Naive thymus-derived CD4-positive, alpha-beta T cell (primary cell): ENCODE measurements at regions of chr6 and their contacts with region 1.

Region 1: DNA sequence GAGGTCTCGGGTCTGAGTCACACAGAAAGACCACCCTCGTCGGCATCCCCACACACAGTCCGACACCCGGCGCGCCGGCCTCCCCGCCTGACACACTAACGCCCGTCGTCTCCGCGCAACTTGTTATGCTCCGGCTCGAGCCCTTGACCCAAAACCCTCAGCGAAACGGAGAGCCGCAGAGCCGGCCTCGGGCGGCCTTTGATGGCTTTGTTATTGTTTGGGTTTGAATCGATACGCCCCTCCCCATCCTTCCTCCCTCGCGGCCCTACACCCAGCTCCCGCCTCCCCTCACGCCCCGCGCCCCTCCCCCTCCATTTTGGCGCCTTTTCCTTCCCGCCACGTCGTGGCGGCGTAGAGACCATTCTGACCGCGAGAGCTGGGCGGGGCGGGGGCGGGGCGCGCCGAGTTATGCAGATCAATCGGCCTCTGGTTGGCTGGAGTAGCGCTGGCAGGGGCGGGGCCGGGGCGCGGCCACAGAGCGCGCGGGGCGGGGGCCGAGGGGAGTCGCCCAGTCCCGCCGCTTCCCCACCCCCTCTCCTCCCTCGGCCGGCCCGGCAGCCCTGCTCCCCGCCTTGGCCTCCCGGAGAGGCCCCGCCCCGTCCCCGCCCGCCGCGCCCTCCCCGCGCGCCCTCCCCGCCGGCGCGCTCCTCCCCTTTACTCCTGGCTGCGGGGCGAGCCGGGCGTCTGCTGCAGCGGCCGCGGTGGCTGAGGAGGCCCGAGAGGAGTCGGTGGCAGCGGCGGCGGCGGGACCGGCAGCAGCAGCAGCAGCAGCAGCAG is at the start of gene PIM1:
- DNase-seq: peak; percentile 91 to 98 (median 95)
- ATAC-seq: peak; percentile 94
- H3K4me3 ChIP-seq: peak within 1 kb of the TSS; percentile 71
- H3K4me3 Mint-ChIP-seq: peak within 1 kb of the TSS; percentile 92 to 100 (median 94)
- H3K27ac ChIP-seq: peak within 1 kb of the TSS; percentile 86
- H3K27ac Mint-ChIP-seq: peak within 1 kb of the TSS; percentile 93 to 98 (median 96)
- H3K4me1 ChIP-seq: peaks cover 21% of the 10 kb centered on the region in 2 donors
- H3K4me1 Mint-ChIP-seq: peaks cover 19 to 40% (median 34%) of the 10 kb centered on the region in 7 donors
- H3K27me3 ChIP-seq: no peaks in the 10 kb centered on the region
- H3K27me3 Mint-ChIP-seq: no peaks in the 10 kb centered on the region
- total RNA-seq, gene PIM1: 100 to 550 (median 172) TPM

Region 2: GRCh38 chr6:36241728-36242127 is 928.0 kb before region 1 on chr6:
- CTCF ChIA-PET with region 1: no interaction called
- POLR2A ChIA-PET with region 1: no interaction called
- intact Hi-C with region 1: no loop called
- DNase-seq: no peak
- ATAC-seq: peak; percentile 66
- H3K4me3 ChIP-seq: no peak overlapping the region
- H3K4me3 Mint-ChIP-seq: peak overlapping the region in 3 of 10 donors; percentile 12 to 48 (median 46)
- H3K27ac ChIP-seq: no peak overlapping the region
- H3K27ac Mint-ChIP-seq: peak overlapping the region in 4 of 9 donors; percentile 2 to 64 (median 24)
- H3K4me1 ChIP-seq: no peaks in the 10 kb centered on the region
- H3K4me1 Mint-ChIP-seq: peaks cover 9 to 20% (median 15%) of the 10 kb centered on the region in 7 donors
- H3K27me3 ChIP-seq: no peaks in the 10 kb centered on the region
- H3K27me3 Mint-ChIP-seq: peaks cover 0 to 25% (median 5%) of the 10 kb centered on the region in 5 donors

Region 3: GRCh38 chr6:36594029-36594815 is 575.5 kb before region 1 on chr6 and contains the start of gene SRSF3:
- CTCF ChIA-PET with region 1: no interaction called
- POLR2A ChIA-PET with region 1: no interaction called
- intact Hi-C with region 1: loop called (anchors 2 to 5 kb)
- DNase-seq: peak; percentile 87 to 99 (median 97)
- ATAC-seq: peak; percentile 95
- H3K4me3 ChIP-seq: peak within 1 kb of the TSS; percentile 85
- H3K4me3 Mint-ChIP-seq: peak within 1 kb of the TSS; percentile 90 to 99 (median 97)
- H3K27ac ChIP-seq: peak within 1 kb of the TSS; percentile 98
- H3K27ac Mint-ChIP-seq: peak within 1 kb of the TSS; percentile 97 to 100 (median 99)
- H3K4me1 ChIP-seq: peaks cover 23 to 34% of the 10 kb centered on the region in 2 donors
- H3K4me1 Mint-ChIP-seq: peaks cover 23 to 50% (median 39%) of the 10 kb centered on the region in 7 donors
- H3K27me3 ChIP-seq: no peaks in the 10 kb centered on the region
- H3K27me3 Mint-ChIP-seq: peaks cover 0 to 3% (median 0%) of the 10 kb centered on the region in 5 donors
- total RNA-seq, gene SRSF3: 317 to 510 (median 426) TPM

Region 4: GRCh38 chr6:36912586-36912985 is 257.1 kb before region 1 on chr6:
- CTCF ChIA-PET with region 1: no interaction called
- POLR2A ChIA-PET with region 1: no interaction called
- intact Hi-C with region 1: loop called in 1 of 2 experiments (anchors 5 kb)
- DNase-seq: peak in 8 of 9 donors; percentile 54 to 81 (median 72)
- ATAC-seq: peak; percentile 94
- H3K4me3 ChIP-seq: peak overlapping the region; percentile 32
- H3K4me3 Mint-ChIP-seq: peak overlapping the region; percentile 60 to 84 (median 74)
- H3K27ac ChIP-seq: peak overlapping the region; percentile 44
- H3K27ac Mint-ChIP-seq: peak overlapping the region; percentile 73 to 97 (median 92)
- H3K4me1 ChIP-seq: peaks cover 23% of the 10 kb centered on the region in 2 donors
- H3K4me1 Mint-ChIP-seq: peaks cover 18 to 69% (median 38%) of the 10 kb centered on the region in 7 donors
- H3K27me3 ChIP-seq: no peaks in the 10 kb centered on the region
- H3K27me3 Mint-ChIP-seq: no peaks in the 10 kb centered on the region

Region 5: GRCh38 chr6:37051138-37052026 is 118.3 kb before region 1 on chr6:
- CTCF ChIA-PET with region 1: interaction called, 115 read pairs
- POLR2A ChIA-PET with region 1: interaction called, 177 read pairs
- intact Hi-C with region 1: loop called (anchors 1 kb)
- DNase-seq: peak; percentile 73 to 87 (median 83)
- ATAC-seq: peak; percentile 83
- H3K4me3 ChIP-seq: peak overlapping the region; percentile 58
- H3K4me3 Mint-ChIP-seq: peak overlapping the region; percentile 66 to 94 (median 72)
- H3K27ac ChIP-seq: peak overlapping the region; percentile 75
- H3K27ac Mint-ChIP-seq: peak overlapping the region; percentile 84 to 99 (median 92)
- H3K4me1 ChIP-seq: peaks cover 46 to 56% of the 10 kb centered on the region in 2 donors
- H3K4me1 Mint-ChIP-seq: peaks cover 49 to 70% (median 57%) of the 10 kb centered on the region in 7 donors
- H3K27me3 ChIP-seq: no peaks in the 10 kb centered on the region
- H3K27me3 Mint-ChIP-seq: no peaks in the 10 kb centered on the region

Region 6: DNA sequence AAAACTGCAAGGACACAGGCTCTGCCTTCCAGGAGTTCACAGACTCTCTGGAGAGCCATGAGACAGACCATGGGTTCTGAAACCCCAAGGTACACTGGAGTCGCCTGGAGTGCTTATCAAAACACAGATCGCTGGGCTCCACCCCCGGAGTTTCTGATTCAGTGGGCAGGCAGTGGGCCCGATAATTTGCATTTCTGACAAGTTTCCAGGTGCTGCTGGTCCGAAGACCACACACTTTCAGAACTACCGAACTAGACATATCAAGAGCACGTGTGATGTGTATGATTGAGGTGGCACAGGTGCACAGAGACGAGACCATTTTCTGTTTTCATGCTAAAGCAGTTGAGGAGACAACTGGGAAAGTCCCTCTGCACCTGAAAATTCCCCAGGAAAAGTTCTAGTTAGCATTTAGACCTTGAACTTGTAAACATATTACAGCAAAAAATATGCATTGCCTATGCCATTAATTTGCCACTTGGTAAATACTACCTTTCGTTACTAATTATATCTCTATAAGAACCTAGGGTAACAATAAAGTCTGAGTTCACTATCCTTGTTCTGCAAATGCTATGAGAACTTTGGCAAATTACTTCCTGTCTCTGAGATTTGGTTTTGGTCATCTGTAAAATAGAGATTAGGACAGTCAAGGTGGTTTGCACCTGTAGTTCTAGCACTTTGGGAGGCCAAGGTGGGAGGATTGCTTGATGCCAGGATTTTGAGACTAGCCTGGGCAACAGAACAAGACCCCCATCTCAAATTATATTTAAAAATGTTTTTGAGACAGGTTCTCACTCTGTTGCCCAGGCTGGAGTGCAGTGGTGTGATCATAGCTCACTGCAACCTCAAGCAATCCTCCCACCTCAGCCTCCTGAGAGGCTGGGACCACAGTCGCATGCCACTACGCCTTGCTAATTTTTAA is 14.0 kb before region 1 on chr6:
- CTCF ChIA-PET with region 1: interaction called, 4 read pairs
- POLR2A ChIA-PET with region 1: interaction called, 15 read pairs
- intact Hi-C with region 1: loop called in 1 of 2 experiments (anchors 1 kb)
- DNase-seq: peak in 1 of 9 donors; percentile 69
- ATAC-seq: peak; percentile 70
- H3K4me3 ChIP-seq: no peak overlapping the region
- H3K4me3 Mint-ChIP-seq: peak overlapping the region in 4 of 10 donors; percentile 26 to 72 (median 39)
- H3K27ac ChIP-seq: no peak overlapping the region
- H3K27ac Mint-ChIP-seq: peak overlapping the region in 7 of 9 donors; percentile 21 to 84 (median 66)
- H3K4me1 ChIP-seq: peaks cover 10% of the 10 kb centered on the region in 2 donors
- H3K4me1 Mint-ChIP-seq: peaks cover 0 to 24% (median 15%) of the 10 kb centered on the region in 7 donors
- H3K27me3 ChIP-seq: no peaks in the 10 kb centered on the region
- H3K27me3 Mint-ChIP-seq: no peaks in the 10 kb centered on the region

Region 7: DNA sequence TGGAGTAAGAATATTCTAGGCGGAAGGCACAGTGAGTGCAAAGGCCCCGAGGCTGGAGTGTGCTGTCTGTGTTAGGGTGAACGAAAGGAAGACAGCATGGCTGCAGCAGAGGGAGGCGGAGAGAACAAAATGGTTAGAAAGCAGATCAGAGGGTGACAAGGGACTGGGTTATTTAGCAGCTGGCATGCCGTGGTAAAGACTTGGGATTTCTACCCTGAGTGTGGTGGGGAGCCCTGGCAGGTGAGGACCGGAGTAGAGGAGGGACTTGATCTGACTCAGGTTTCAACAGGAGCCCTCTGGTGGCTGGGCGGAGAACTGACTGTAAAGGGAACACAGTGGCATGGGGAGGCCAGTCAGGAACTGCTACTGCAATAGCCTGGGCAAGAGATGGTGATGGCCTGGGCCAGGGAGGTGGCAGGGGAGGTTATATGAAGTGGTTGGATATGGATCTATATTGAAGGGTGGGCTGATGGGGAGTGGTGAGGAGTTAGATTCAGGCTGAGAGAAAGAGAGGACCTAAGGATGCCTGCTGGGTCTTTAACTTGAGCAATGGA is 38.3 kb after region 1 on chr6:
- CTCF ChIA-PET with region 1: interaction called, 112 read pairs
- POLR2A ChIA-PET with region 1: interaction called, 89 read pairs
- intact Hi-C with region 1: loop called (anchors 1 kb)
- DNase-seq: peak; percentile 67 to 85 (median 82)
- ATAC-seq: peak; percentile 87
- H3K4me3 ChIP-seq: no peak overlapping the region
- H3K4me3 Mint-ChIP-seq: peak overlapping the region; percentile 4 to 77 (median 68)
- H3K27ac ChIP-seq: peak overlapping the region; percentile 23
- H3K27ac Mint-ChIP-seq: peak overlapping the region; percentile 72 to 98 (median 91)
- H3K4me1 ChIP-seq: peaks cover 36 to 39% of the 10 kb centered on the region in 2 donors
- H3K4me1 Mint-ChIP-seq: peaks cover 36 to 69% (median 64%) of the 10 kb centered on the region in 7 donors
- H3K27me3 ChIP-seq: no peaks in the 10 kb centered on the region
- H3K27me3 Mint-ChIP-seq: no peaks in the 10 kb centered on the region

Region 8: GRCh38 chr6:37499433-37500293 is 330.0 kb after region 1 on chr6 and contains the start of gene CCDC167:
- CTCF ChIA-PET with region 1: no interaction called
- POLR2A ChIA-PET with region 1: no interaction called
- intact Hi-C with region 1: loop called in 1 of 2 experiments (anchors 5 kb)
- DNase-seq: peak; percentile 86 to 96 (median 90)
- ATAC-seq: peak; percentile 76
- H3K4me3 ChIP-seq: peak within 1 kb of the TSS; percentile 78
- H3K4me3 Mint-ChIP-seq: peak within 1 kb of the TSS; percentile 90 to 100 (median 98)
- H3K27ac ChIP-seq: peak within 1 kb of the TSS; percentile 91
- H3K27ac Mint-ChIP-seq: peak within 1 kb of the TSS; percentile 84 to 99 (median 95)
- H3K4me1 ChIP-seq: peaks cover 60 to 67% of the 10 kb centered on the region in 2 donors
- H3K4me1 Mint-ChIP-seq: peaks cover 60 to 93% (median 85%) of the 10 kb centered on the region in 7 donors
- H3K27me3 ChIP-seq: no peaks in the 10 kb centered on the region
- H3K27me3 Mint-ChIP-seq: no peaks in the 10 kb centered on the region
- total RNA-seq, gene CCDC167: 13.8 to 55.1 (median 18.0) TPM